Ascending aorta (tissue), 2 donors: ENCODE measurements at regions of chr14 and their contacts with region 1.

Region 1: DNA sequence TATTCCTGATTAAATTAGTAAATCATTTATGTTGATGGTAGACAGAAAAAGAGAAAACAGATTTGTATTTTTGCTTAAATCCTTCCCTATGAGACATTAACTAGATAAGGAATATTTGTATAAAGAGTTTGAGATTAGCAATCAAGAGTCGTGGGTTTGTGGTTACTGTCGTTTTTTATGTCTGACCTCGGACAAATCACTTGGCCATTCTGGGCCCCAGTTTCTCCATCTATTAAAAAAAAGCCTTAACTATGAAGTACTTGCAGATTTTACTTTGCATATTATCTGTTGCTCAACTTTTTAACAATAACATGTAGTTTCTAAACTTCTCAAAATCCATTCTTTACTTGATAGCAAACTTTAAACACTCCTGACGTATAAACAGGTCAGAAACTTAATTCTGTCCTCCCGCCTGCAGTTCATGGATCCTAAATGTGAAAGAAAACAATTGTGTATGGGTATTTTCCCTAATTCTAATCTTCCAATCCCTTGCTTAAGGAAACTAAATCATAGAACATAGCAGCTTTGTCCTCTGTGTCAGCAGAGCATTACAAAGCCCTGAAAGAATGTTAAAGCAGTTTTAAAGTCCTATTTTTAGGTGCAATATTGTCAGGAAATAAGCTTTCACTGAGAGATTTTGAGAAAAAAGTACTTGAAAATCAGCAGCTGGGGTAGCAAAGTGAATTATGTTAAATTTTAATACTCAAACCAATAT is 118.2 kb downstream of the GPR135 start:
- DNase-seq: no peak
- H3K4me3 ChIP-seq: no peak overlapping the region
- H3K27ac ChIP-seq: peak overlapping the region; percentile 85 to 88
- H3K4me1 ChIP-seq: peaks cover 0 to 68% of the 10 kb centered on the region in 2 donors
- H3K27me3 ChIP-seq: no peaks in the 10 kb centered on the region
- CTCF ChIP-seq: no peak

Region 2: DNA sequence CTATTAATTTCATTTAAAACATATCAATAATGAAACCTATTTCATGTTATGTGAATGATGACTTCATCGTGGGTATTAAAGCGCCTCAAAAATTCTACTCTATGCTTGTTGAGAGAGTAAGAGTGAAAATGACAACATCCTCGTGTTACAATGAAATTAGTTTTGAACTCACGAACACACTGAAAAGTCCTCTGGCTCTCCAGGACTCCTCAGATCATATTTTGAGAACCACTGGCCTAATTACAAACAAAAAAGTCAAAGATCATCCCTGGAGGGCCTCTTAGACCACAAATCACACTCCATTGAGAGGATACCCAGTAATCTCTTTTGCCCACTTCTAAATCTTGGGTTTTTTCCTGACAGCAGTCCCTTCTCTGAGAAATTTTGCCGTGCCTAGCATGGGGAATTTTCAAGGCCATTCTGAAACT is 139.4 kb before region 1 on chr14:
- intact Hi-C with region 1: no loop called
- DNase-seq: no peak
- H3K4me3 ChIP-seq: no peak overlapping the region
- H3K27ac ChIP-seq: peak overlapping the region in 1 of 2 donors; percentile 12
- H3K4me1 ChIP-seq: peaks cover 0 to 29% of the 10 kb centered on the region in 2 donors
- H3K27me3 ChIP-seq: no peaks in the 10 kb centered on the region
- CTCF ChIP-seq: no peak

Region 3: DNA sequence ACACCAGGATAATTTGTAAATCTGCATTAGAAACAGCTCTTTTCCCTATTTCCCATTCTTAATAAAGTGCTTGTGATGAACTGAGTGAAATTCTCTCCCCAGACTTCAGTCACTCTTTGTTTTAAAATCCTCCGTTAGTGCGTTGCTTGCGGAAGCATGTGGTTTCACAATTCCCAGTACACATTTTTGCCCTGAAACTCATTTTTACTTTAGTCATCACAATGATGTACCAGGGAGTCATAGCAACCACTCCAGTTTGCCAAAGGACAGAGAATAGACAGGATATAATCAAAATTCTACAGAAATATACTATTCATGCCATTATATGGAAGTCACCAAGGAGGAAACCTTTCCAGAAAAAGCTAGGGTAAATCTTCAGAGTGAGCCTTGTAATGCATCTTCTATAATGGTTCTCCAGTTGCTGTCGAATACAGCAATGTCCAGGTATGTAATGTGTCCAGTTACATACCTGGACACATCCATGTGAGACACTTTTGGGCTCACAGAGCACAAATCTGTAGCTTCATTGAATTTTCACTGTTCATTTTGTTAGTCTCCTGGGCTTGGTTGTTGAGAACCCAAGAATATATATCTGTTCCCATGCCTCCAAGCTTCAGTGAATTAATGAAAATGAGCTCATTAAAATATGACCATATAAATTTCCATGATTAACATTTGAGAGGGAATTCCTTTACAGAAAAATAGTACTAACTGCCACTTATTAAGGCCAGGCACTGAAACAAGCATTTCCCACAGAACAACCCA is 60.5 kb after region 1 on chr14:
- intact Hi-C with region 1: loop called (anchors 2 kb)
- DNase-seq: no peak
- H3K4me3 ChIP-seq: no peak overlapping the region
- H3K27ac ChIP-seq: peak overlapping the region; percentile 43 to 52
- H3K4me1 ChIP-seq: peaks cover 0 to 9% of the 10 kb centered on the region in 2 donors
- H3K27me3 ChIP-seq: no peaks in the 10 kb centered on the region
- CTCF ChIP-seq: no peak

Region 4: GRCh38 chr14:59422069-59422881 is 75.3 kb after region 1 on chr14:
- intact Hi-C with region 1: loop called (anchors 5 kb)
- DNase-seq: peak in 1 of 2 donors; percentile 70
- H3K4me3 ChIP-seq: no peak overlapping the region
- H3K27ac ChIP-seq: peak overlapping the region; percentile 65 to 72
- H3K4me1 ChIP-seq: peaks cover 7 to 35% of the 10 kb centered on the region in 2 donors
- H3K27me3 ChIP-seq: no peaks in the 10 kb centered on the region
- CTCF ChIP-seq: peak in 2 of 3 experiments; percentile 14 to 28

Region 5: GRCh38 chr14:59438195-59438647 is 91.3 kb after region 1 on chr14:
- intact Hi-C with region 1: loop called (anchors 5 kb)
- DNase-seq: no peak
- H3K4me3 ChIP-seq: no peak overlapping the region
- H3K27ac ChIP-seq: peak overlapping the region; percentile 41 to 69
- H3K4me1 ChIP-seq: peaks cover 2 to 36% of the 10 kb centered on the region in 2 donors
- H3K27me3 ChIP-seq: no peaks in the 10 kb centered on the region
- CTCF ChIP-seq: no peak